GM12878 (cell line): ENCODE measurements at regions of chr22 and their contacts with region 1.

Region 1: DNA sequence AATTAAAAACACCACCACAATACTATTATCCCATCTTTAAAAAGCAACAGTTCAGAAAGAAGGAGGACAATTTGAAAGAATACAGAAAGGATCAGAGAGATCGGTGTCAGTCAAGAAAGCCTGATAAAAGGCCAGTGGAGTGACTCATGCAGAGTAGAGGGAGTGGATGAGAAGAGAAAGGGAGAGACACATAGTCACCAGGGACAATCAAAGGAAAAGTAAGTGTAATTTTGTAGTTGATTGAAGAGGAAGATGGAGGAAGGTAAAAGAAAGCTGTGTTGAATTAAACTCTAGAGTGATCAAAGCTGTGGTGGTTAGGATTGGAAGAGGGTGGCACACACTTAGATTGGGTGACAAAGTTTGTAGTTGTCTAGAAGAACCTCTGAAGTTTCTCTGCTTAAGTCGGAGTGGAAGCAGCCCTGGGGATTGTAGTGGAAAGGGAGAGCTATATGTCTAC is 14.1 kb downstream of the SPECC1L start:
- DNase-seq: no peak
- ATAC-seq: peak; percentile 65
- H3K4me3 ChIP-seq: no peak overlapping the region
- H3K27ac ChIP-seq: 0 out of 2 replicates have a peak overlapping the region, but pooled peaks have one; percentile 10
- H3K4me1 ChIP-seq: peaks cover 15% of the 10 kb centered on the region
- H3K27me3 ChIP-seq: no peaks in the 10 kb centered on the region
- CTCF ChIP-seq: no peak
- EP300 ChIP-seq: no peak
- POLR2A ChIP-seq: no peak
- RAD21 ChIP-seq: no peak

Region 2: DNA sequence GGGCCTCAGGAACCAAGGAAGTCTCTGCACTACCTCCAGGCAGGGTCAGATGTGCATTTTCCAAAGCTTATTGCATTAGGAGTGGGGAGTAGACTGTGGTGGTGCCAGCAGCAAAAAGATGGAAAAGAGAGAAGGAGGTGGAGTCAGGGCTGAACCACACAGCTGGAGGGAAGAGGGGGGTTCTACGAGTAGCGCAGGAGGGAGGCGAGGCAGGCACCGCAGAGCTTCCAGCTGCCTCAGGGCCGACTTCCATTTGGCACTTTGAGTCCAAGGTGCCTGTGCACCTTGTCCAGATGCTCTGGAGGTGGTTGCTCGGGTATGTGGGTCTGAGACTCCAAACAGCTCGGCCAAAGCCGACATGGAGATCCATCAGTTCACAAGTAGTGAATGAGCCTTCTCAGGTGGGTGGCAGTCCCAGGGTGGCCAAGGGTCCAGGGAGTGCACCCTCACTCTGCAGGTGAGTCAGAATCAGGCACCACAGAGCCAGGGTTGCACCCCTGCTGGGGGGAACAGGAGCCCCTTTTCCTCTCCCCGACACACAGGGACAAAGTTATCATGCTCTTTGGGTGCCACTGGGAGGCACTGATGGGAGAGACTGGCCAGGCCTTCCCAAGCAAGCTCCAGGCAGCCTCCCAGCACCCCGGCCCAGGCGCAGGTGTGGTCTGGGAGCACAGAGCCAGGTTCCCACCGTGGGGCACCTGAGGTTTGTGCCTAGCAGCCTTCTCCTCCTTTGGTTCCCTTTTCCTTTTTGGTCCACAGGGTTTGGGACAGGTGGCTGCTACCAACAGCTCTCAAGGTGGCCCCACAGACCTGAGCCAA is 70.1 kb before region 1 on chr22:
- CTCF ChIA-PET with region 1: no interaction called
- POLR2A ChIA-PET with region 1: no interaction called
- RAD21 ChIA-PET with region 1: no interaction called
- SMC1A ChIA-PET with region 1: no interaction called
- in situ Hi-C with region 1: no loop called
- intact Hi-C with region 1: no loop called
- DNase-seq: no peak
- ATAC-seq: no peak
- H3K4me3 ChIP-seq: no peak overlapping the region
- H3K27ac ChIP-seq: no peak overlapping the region
- H3K4me1 ChIP-seq: peaks cover 4% of the 10 kb centered on the region; the same call in 1 of the 2 replicates
- H3K27me3 ChIP-seq: no peaks in the 10 kb centered on the region
- CTCF ChIP-seq: no peak
- EP300 ChIP-seq: no peak
- POLR2A ChIP-seq: no peak
- RAD21 ChIP-seq: no peak

Region 3: DNA sequence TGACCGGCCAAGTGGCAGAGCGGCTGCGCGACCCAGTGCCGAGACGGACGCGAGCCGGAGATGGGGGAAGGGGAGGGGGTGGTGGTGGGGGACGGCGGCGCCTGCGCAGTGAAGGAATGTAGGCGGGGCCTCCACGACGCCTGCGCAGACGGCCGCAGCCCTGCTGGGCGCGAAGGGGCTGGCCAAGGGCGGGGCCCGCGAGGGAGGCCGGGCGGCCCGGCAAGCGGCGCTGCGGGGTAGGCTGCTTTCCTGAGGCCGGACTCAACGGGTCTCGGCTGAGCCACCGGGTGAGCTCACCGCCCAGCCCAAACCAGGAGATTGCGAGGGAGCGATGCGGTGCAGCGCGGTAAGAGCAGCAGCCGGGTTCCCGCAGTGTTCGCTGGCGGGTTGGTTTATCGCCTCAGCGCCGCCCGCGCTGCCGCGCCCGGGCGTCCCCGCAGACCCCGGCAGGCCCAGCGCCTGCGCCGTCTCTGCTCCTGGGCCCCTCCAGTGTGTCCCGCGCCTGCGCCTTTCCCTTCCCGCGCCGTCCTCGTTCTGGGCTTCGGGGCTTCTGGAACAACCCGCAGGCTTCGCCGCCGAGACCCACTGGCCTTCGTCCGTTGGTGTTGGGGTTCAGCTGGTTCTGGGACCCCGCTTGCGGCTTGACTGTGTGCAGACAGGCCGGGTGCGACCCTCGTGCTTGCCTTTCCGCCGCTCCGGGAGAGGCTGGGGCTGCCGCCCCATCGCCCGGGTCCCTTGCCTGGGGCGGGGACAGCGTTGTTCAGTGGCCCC is 14.0 kb before region 1 on chr22 and contains the start of gene SPECC1L:
- CTCF ChIA-PET with region 1: interaction called, 8 read pairs
- POLR2A ChIA-PET with region 1: interaction called, 6 read pairs
- RAD21 ChIA-PET with region 1: interaction called, 7 read pairs
- SMC1A ChIA-PET with region 1: interaction called, 21 read pairs
- in situ Hi-C with region 1: no loop called
- intact Hi-C with region 1: no loop called
- DNase-seq: peak; percentile 71
- ATAC-seq: peak; percentile 89
- H3K4me3 ChIP-seq: peak within 1 kb of the TSS; percentile 94
- H3K27ac ChIP-seq: peak within 1 kb of the TSS; percentile 78
- H3K4me1 ChIP-seq: peaks cover 15% of the 10 kb centered on the region
- H3K27me3 ChIP-seq: no peaks in the 10 kb centered on the region
- CTCF ChIP-seq: peak in 1 of 3 experiments; percentile 19; a peak in 1 of 6 replicates
- EP300 ChIP-seq: no peak
- POLR2A ChIP-seq: peak; percentile 96
- RAD21 ChIP-seq: no peak
- polyA plus RNA-seq, gene SPECC1L: 1.9 to 2.4 TPM